BJ (cell line): ENCODE measurements at regions of chr6 and their contacts with region 1.

Region 1: GRCh38 chr6:105374010-105374420 is 28.9 kb downstream of the PREP start:
- DNase-seq: no peak
- H3K4me3 ChIP-seq: no peak overlapping the region
- H3K27me3 ChIP-seq: no peaks in the 10 kb centered on the region
- CTCF ChIP-seq: no peak

Region 2: DNA sequence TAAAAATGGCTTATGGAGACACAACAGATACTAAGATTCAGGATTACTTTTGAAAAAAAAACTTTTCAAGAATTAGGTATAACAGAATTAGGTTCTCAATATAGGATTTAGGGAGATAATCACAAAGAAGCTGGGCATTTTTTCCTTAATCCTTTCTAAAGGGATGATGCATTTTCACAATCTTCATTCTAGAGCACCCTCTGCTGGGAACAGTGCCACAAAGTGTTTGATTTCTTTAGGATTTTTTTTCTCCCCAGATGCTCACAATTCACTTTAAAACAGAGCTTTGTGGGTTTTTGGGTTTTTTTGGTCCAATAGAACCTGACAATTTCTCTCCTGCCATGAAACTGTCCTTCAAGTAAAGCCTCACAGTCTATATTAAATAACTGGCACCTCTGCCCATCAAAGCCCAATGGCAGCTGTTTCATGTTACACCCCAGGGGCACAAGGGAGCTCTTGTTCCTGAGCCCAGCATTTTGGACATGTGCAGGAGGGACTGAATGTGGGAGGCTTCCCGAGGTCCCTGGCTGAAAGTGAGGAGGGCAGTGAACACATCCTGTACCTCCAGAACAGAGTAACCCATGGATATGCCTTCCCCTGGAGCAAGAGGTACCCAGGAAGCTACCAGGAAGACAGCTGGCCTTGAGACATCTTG is 10.8 kb before region 1 on chr6:
- CTCF ChIA-PET with region 1: interaction called, 18 read pairs
- POLR2A ChIA-PET with region 1: no interaction called
- DNase-seq: no peak
- H3K4me3 ChIP-seq: no peak overlapping the region
- H3K27me3 ChIP-seq: no peaks in the 10 kb centered on the region
- CTCF ChIP-seq: peak; percentile 42

Region 3: DNA sequence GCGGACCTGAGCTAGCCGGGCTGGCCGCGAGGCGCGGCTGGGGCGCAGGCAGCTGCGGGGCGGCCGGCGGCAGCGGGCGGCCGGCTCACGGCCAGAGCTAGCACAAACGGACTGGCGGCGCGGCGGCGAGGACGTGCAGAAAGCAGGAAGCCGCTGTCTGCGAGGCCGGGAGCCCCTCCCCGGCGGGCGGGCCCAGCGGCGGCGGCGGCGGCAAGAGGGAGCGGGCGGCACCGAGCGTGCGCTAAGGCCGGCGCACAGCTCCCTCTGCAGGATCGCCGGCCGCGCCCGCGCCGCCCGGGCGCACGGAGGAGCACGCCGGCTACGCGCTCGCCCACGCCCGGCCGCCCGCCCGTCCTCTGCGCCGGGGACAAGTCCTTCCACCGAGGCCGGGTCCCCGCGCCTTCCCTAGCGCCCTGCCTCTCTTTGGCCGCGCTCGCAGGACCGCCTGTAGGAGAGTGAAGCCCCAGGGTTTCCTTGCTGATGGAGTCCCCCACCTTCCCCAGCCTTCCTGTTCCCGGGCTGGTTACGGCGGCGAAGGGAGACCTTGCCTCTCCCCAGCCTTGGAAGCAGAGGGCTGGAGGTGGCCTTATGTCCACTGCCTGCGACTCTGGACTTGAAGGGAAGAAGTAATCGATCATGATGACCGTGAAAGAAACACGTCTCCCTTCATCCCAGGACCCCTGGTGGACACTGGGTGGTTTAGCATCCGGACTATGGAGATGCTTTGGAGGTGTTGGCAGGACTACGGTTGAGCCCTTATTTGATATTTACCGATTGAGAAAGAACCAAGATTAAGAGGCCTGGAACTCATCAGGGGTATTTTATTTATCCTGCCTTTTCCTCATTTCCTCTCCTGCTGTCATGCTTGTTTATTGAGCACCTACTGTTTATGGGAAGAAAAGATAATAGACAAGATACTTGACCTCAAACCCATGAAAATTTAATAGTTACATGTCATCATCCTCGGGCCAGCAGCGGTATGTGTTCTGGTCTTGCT is 29.2 kb after region 1 on chr6 and contains the start of gene PREP:
- CTCF ChIA-PET with region 1: interaction called, 10 read pairs
- POLR2A ChIA-PET with region 1: no interaction called
- DNase-seq: no peak
- H3K4me3 ChIP-seq: peak within 1 kb of the TSS; percentile 85
- H3K27me3 ChIP-seq: no peaks in the 10 kb centered on the region
- CTCF ChIP-seq: peak; percentile 83
- polyA plus RNA-seq, gene PREP: 10.8 and 12.0 TPM in 2 replicates